ENCODE measurements at regions of chr19 and their contacts with region 1.

Region 1: GRCh38 chr19:44777715-44778347 is at the start of gene CBLC:
- DNase-seq: no peak
- ATAC-seq: no peak
- H3K4me3 ChIP-seq: no peak within 1 kb of the TSS
- H3K4me3 Mint-ChIP-seq: no peak within 1 kb of the TSS
- H3K27ac ChIP-seq: no peak within 1 kb of the TSS
- H3K27ac Mint-ChIP-seq: no peak within 1 kb of the TSS
- H3K4me1 ChIP-seq: no peaks in the 10 kb centered on the region
- H3K4me1 Mint-ChIP-seq: no peaks in the 10 kb centered on the region
- H3K27me3 ChIP-seq: peaks cover 0 to 15% (median 1%) of the 10 kb centered on the region in 4 experiments
- H3K27me3 Mint-ChIP-seq: peaks cover 8% of the 10 kb centered on the region
- CTCF ChIP-seq: no peak
- total RNA-seq, gene CBLC: not detected in 2 replicates

Region 2: GRCh38 chr19:44367024-44367423 is 410.8 kb before region 1 on chr19:
- CTCF ChIA-PET with region 1: no interaction called
- POLR2A ChIA-PET with region 1: no interaction called
- intact Hi-C with region 1: no loop called
- DNase-seq: no peak
- ATAC-seq: no peak
- H3K4me3 ChIP-seq: no peak overlapping the region
- H3K4me3 Mint-ChIP-seq: no peak overlapping the region
- H3K27ac ChIP-seq: no peak overlapping the region
- H3K27ac Mint-ChIP-seq: no peak overlapping the region
- H3K4me1 ChIP-seq: no peaks in the 10 kb centered on the region
- H3K4me1 Mint-ChIP-seq: no peaks in the 10 kb centered on the region
- H3K27me3 ChIP-seq: peaks cover 0 to 3% (median 0%) of the 10 kb centered on the region in 4 experiments
- H3K27me3 Mint-ChIP-seq: peaks cover 20% of the 10 kb centered on the region
- CTCF ChIP-seq: no peak

Region 3: GRCh38 chr19:44820648-44821609 is 43.1 kb after region 1 on chr19:
- CTCF ChIA-PET with region 1: no interaction called
- POLR2A ChIA-PET with region 1: no interaction called
- intact Hi-C with region 1: no loop called
- DNase-seq: no peak
- ATAC-seq: no peak
- H3K4me3 ChIP-seq: no peak overlapping the region
- H3K4me3 Mint-ChIP-seq: no peak overlapping the region
- H3K27ac ChIP-seq: no peak overlapping the region
- H3K27ac Mint-ChIP-seq: no peak overlapping the region
- H3K4me1 ChIP-seq: no peaks in the 10 kb centered on the region
- H3K4me1 Mint-ChIP-seq: no peaks in the 10 kb centered on the region
- H3K27me3 ChIP-seq: no peaks in the 10 kb centered on the region
- H3K27me3 Mint-ChIP-seq: peaks cover 11% of the 10 kb centered on the region
- CTCF ChIP-seq: no peak

Region 4: DNA sequence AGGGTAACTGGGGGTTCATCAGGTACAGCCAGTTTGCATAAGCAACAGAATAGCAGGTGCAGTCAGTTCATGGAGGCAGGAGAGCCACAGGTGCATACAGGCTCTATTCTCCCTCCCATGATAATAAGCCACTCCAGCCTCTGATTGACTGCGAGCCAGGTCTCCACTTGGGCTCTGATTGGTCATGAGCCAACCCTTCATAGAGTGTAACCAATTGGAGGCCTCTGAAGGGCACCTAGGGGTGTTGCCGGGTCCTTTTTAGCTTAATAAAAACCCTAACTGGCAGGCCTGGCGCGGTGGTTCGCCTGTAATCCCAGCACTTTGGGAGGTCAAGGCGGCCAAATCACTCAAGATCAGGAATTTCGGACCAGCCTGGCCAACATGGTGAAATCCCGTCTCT is 553.6 kb after region 1 on chr19:
- CTCF ChIA-PET with region 1: no interaction called
- POLR2A ChIA-PET with region 1: no interaction called
- intact Hi-C with region 1: loop called (anchors 10 kb)
- DNase-seq: no peak
- ATAC-seq: no peak
- H3K4me3 ChIP-seq: no peak overlapping the region
- H3K4me3 Mint-ChIP-seq: no peak overlapping the region
- H3K27ac ChIP-seq: no peak overlapping the region
- H3K27ac Mint-ChIP-seq: no peak overlapping the region
- H3K4me1 ChIP-seq: no peaks in the 10 kb centered on the region
- H3K4me1 Mint-ChIP-seq: peaks cover under 1% of the 10 kb centered on the region
- H3K27me3 ChIP-seq: no peaks in the 10 kb centered on the region
- H3K27me3 Mint-ChIP-seq: peaks cover 11% of the 10 kb centered on the region
- CTCF ChIP-seq: no peak

Region 5: GRCh38 chr19:45339629-45340028 is 561.8 kb after region 1 on chr19:
- CTCF ChIA-PET with region 1: interaction called, 11 read pairs
- POLR2A ChIA-PET with region 1: no interaction called
- intact Hi-C with region 1: loop called (anchors 10 kb)
- DNase-seq: no peak
- ATAC-seq: no peak
- H3K4me3 ChIP-seq: no peak overlapping the region
- H3K4me3 Mint-ChIP-seq: no peak overlapping the region
- H3K27ac ChIP-seq: no peak overlapping the region
- H3K27ac Mint-ChIP-seq: no peak overlapping the region
- H3K4me1 ChIP-seq: peaks cover 11 to 16% of the 10 kb centered on the region in 2 donors
- H3K4me1 Mint-ChIP-seq: peaks cover 6% of the 10 kb centered on the region
- H3K27me3 ChIP-seq: peaks cover 0 to 36% (median 6%) of the 10 kb centered on the region in 4 experiments
- H3K27me3 Mint-ChIP-seq: peaks cover 31% of the 10 kb centered on the region
- CTCF ChIP-seq: no peak